ENCODE measurements at regions of chr6 and their contacts with region 1.

Region 1: GRCh38 chr6:158869826-158870648 is 50.9 kb upstream of the EZR start:
- DNase-seq: peak; percentile 99
- ATAC-seq: peak; percentile 70
- H3K4me3 ChIP-seq: peak overlapping the region in 4 of 5 experiments; percentile 41 to 55 (median 51)
- H3K4me3 Mint-ChIP-seq: peak overlapping the region; percentile 91
- H3K27ac ChIP-seq: peak overlapping the region; percentile 99 to 100
- H3K27ac Mint-ChIP-seq: peak overlapping the region; percentile 100
- H3K4me1 ChIP-seq: peaks cover 50 to 54% of the 10 kb centered on the region in 2 donors
- H3K4me1 Mint-ChIP-seq: peaks cover 61% of the 10 kb centered on the region
- H3K27me3 ChIP-seq: no peaks in the 10 kb centered on the region
- H3K27me3 Mint-ChIP-seq: no peaks in the 10 kb centered on the region
- CTCF ChIP-seq: peak; percentile 44

Region 2: DNA sequence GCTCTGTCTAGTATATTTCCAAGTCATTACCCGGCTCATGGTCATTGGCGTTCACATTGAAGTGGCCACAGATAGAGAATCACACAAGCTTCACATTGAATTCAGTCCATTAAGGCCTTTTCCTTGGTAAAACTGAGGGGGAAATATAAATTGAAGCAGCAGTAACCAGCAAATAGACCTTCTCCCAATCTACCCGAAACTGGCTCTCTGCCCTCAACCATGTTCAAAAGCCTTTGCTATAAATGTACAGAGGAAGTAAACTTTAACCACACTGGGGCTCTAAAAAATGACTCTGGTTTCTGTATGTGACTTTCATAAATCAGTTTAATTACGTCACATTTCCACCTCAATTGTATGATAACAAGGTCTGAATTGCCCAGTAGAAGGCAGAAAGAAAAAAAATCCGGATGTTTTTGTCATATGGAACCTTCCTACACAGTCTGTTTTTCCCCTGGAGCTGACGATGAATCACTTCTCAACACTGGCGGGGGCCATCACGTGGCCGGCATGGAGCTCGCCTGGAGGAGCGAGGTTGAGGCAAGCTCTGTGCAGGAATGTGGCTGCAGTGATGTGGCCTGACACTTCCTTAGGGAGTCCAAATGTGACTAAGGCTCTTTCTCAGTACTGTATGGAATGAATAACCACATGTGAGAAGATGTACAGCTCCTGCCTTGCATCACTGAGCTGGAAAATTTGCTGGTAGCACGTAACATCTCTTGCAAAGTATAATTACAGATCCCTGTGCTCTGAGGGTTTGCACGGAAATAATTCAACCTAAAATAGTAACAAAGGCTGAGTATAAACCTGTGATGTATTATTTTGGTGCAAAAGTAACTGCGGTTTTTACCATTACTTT is 1105.6 kb before region 1 on chr6:
- CTCF ChIA-PET with region 1: no interaction called
- POLR2A ChIA-PET with region 1: no interaction called
- intact Hi-C with region 1: loop called (anchors 10 kb)
- DNase-seq: peak; percentile 90
- ATAC-seq: peak; percentile 51
- H3K4me3 ChIP-seq: peak overlapping the region; percentile 13 to 56 (median 30)
- H3K4me3 Mint-ChIP-seq: peak overlapping the region; percentile 69
- H3K27ac ChIP-seq: peak overlapping the region; percentile 84
- H3K27ac Mint-ChIP-seq: peak overlapping the region; percentile 97
- H3K4me1 ChIP-seq: peaks cover 88 to 95% of the 10 kb centered on the region in 2 donors
- H3K4me1 Mint-ChIP-seq: peaks cover 88% of the 10 kb centered on the region
- H3K27me3 ChIP-seq: no peaks in the 10 kb centered on the region
- H3K27me3 Mint-ChIP-seq: no peaks in the 10 kb centered on the region
- CTCF ChIP-seq: no peak

Region 3: DNA sequence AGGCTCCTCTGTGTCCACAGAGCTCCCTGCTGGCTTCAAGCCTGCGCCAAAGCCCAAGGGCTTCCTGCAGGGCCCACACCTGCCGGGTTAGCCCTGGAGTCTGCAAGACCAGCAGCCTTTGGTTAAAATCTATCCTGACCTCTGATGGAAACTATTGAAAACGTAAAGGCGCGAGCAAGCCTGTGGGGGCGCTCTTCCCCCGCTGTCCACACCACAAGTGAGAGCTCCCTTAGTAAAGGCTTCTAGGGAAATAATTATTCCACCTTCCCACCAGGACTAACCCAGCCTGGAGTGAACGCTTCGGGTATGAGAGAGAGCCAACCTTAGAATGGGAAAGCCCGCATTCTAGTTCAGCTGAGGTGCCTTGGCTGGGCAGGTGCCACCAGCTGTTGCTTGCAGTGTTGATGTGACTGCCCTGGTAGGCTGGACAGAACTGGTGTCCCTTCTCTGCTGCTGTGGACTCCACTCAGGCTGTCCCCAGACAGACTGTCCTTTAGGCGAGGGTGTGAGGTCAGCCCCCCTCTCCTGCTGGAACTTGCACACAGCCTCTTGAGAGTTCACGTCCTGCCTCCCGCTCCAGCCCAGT is 151.5 kb before region 1 on chr6:
- CTCF ChIA-PET with region 1: interaction called, 6 read pairs
- POLR2A ChIA-PET with region 1: interaction called, 6 read pairs
- intact Hi-C with region 1: loop called (anchors 2 kb)
- DNase-seq: no peak
- ATAC-seq: no peak
- H3K4me3 ChIP-seq: no peak overlapping the region
- H3K4me3 Mint-ChIP-seq: peak overlapping the region; percentile 16
- H3K27ac ChIP-seq: peak overlapping the region; percentile 86 to 90
- H3K27ac Mint-ChIP-seq: peak overlapping the region; percentile 96
- H3K4me1 ChIP-seq: peaks cover 54 to 71% of the 10 kb centered on the region in 2 donors
- H3K4me1 Mint-ChIP-seq: peaks cover 64% of the 10 kb centered on the region
- H3K27me3 ChIP-seq: no peaks in the 10 kb centered on the region
- H3K27me3 Mint-ChIP-seq: no peaks in the 10 kb centered on the region
- CTCF ChIP-seq: no peak

Region 4: GRCh38 chr6:158826801-158827573 is 43.0 kb before region 1 on chr6:
- CTCF ChIA-PET with region 1: interaction called, 41 read pairs
- POLR2A ChIA-PET with region 1: interaction called, 162 read pairs
- intact Hi-C with region 1: loop called (anchors 1 kb)
- DNase-seq: peak; percentile 79
- ATAC-seq: peak; percentile 81
- H3K4me3 ChIP-seq: no peak overlapping the region
- H3K4me3 Mint-ChIP-seq: peak overlapping the region; percentile 42
- H3K27ac ChIP-seq: peak overlapping the region; percentile 84 to 89
- H3K27ac Mint-ChIP-seq: peak overlapping the region; percentile 81
- H3K4me1 ChIP-seq: peaks cover 26 to 27% of the 10 kb centered on the region in 2 donors
- H3K4me1 Mint-ChIP-seq: peaks cover 32% of the 10 kb centered on the region
- H3K27me3 ChIP-seq: no peaks in the 10 kb centered on the region
- H3K27me3 Mint-ChIP-seq: no peaks in the 10 kb centered on the region
- CTCF ChIP-seq: no peak

Region 5: GRCh38 chr6:158858915-158859314 is 11.1 kb before region 1 on chr6:
- CTCF ChIA-PET with region 1: interaction called, 52 read pairs
- POLR2A ChIA-PET with region 1: interaction called, 107 read pairs
- intact Hi-C with region 1: no loop called
- DNase-seq: no peak
- ATAC-seq: no peak
- H3K4me3 ChIP-seq: no peak overlapping the region
- H3K4me3 Mint-ChIP-seq: no peak overlapping the region
- H3K27ac ChIP-seq: no peak overlapping the region
- H3K27ac Mint-ChIP-seq: no peak overlapping the region
- H3K4me1 ChIP-seq: peaks cover 37 to 46% of the 10 kb centered on the region in 2 donors
- H3K4me1 Mint-ChIP-seq: peaks cover 35% of the 10 kb centered on the region
- H3K27me3 ChIP-seq: no peaks in the 10 kb centered on the region
- H3K27me3 Mint-ChIP-seq: no peaks in the 10 kb centered on the region
- CTCF ChIP-seq: no peak

Region 6: DNA sequence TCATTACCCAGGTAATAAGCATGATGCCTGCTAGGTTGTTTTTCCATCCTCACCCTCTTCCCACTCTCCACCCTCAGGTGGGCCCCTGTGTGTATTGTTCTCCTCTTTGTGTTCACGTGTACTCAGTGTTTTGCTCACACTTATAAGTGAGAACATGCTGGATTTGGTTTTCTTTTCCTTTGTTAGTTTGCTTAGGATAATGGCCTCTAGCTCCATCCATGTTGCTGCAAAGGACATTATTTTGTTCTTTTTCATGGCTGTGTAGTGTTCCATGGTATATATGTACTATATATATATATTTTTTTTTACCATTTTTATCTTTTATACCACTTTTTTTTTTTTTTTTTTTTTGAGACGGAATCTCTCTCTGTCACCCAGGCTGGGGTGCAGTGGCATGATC is 58.0 kb after region 1 on chr6:
- CTCF ChIA-PET with region 1: no interaction called
- POLR2A ChIA-PET with region 1: no interaction called
- intact Hi-C with region 1: no loop called
- DNase-seq: no peak
- ATAC-seq: no peak
- H3K4me3 ChIP-seq: no peak overlapping the region
- H3K4me3 Mint-ChIP-seq: no peak overlapping the region
- H3K27ac ChIP-seq: no peak overlapping the region
- H3K27ac Mint-ChIP-seq: no peak overlapping the region
- H3K4me1 ChIP-seq: no peaks in the 10 kb centered on the region
- H3K4me1 Mint-ChIP-seq: no peaks in the 10 kb centered on the region
- H3K27me3 ChIP-seq: no peaks in the 10 kb centered on the region
- H3K27me3 Mint-ChIP-seq: no peaks in the 10 kb centered on the region
- CTCF ChIP-seq: no peak

Region 7: DNA sequence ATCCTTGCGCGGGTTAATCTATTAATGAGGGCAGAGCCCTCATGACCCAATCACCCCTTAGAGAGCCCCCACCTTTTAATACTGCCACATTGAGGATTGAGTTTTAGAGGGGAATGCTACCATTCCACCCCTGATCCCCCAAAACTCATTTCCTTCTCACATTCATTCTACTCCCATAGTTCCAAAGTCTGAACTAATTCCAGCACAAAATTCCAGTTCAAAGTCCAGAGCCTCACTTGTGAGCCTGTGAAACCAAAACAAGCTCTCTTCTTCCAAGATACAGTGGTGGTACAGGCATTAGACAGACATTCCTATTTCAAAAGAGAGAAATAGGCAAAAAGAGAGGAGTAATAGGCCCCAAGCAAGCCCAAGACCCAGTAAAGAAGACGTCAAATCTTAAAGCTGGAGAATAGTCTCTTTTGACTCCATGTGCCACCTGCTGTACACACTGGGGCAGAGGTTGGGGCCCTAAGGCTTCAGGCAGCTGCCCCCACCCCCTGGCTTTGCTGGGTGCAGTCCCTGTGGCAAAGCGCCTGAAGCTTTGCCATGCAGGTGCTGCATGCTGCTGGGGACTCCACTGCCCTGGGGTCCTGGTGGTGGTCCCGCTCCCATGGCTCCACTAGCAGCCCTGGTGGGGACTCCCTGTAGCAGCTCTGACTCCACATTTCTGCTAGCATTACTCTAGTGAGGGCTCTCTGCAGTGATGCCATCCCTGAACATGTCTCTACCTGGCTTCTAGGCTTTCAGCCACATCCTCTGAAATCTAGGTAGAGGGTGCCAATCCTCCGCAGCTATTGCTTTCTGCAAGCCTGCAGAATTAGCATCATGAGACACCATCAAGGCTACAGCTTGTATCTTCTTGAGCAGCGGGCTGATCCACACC is 88.7 kb after region 1 on chr6:
- CTCF ChIA-PET with region 1: interaction called, 18 read pairs
- POLR2A ChIA-PET with region 1: interaction called, 12 read pairs
- intact Hi-C with region 1: loop called (anchors 5 kb)
- DNase-seq: peak; percentile 71
- ATAC-seq: peak; percentile 82
- H3K4me3 ChIP-seq: no peak overlapping the region
- H3K4me3 Mint-ChIP-seq: no peak overlapping the region
- H3K27ac ChIP-seq: no peak overlapping the region
- H3K27ac Mint-ChIP-seq: peak overlapping the region; percentile 69
- H3K4me1 ChIP-seq: peaks cover 5 to 10% of the 10 kb centered on the region in 2 donors
- H3K4me1 Mint-ChIP-seq: peaks cover 23% of the 10 kb centered on the region
- H3K27me3 ChIP-seq: no peaks in the 10 kb centered on the region
- H3K27me3 Mint-ChIP-seq: no peaks in the 10 kb centered on the region
- CTCF ChIP-seq: peak; percentile 42

Region 8: GRCh38 chr6:159941286-159942113 is 1071.5 kb after region 1 on chr6:
- CTCF ChIA-PET with region 1: no interaction called
- POLR2A ChIA-PET with region 1: no interaction called
- intact Hi-C with region 1: no loop called
- DNase-seq: peak; percentile 51
- ATAC-seq: peak; percentile 31
- H3K4me3 ChIP-seq: no peak overlapping the region
- H3K4me3 Mint-ChIP-seq: no peak overlapping the region
- H3K27ac ChIP-seq: no peak overlapping the region
- H3K27ac Mint-ChIP-seq: no peak overlapping the region
- H3K4me1 ChIP-seq: no peaks in the 10 kb centered on the region
- H3K4me1 Mint-ChIP-seq: no peaks in the 10 kb centered on the region
- H3K27me3 ChIP-seq: peaks cover 0 to 2% (median 0%) of the 10 kb centered on the region in 4 experiments
- H3K27me3 Mint-ChIP-seq: peaks cover 15% of the 10 kb centered on the region
- CTCF ChIP-seq: peak; percentile 22

Measured in B cell (primary cell).